PC-9 (cell line): ENCODE measurements at regions of chr17 and their contacts with region 1.

Region 1: DNA sequence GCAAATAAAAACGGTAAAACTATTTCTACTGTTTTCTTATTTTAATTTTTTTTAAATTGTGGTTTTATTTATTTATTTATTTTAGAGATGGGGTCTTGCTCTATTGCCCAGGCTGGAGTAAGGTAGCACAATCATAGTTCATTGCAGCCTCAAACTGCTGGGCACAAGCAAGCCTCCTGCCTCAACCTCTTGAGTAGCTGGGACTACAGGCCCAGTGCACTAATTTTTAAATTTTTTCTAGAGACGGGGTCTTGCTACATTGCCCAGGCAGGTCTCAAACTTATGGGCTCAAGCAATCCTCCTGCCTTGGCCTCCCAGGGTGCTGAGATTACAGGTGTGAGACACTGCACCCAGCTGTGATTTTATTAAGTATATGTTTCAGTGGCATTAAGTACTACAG is 46.5 kb upstream of the MRC2 start:
- DNase-seq: no peak
- H3K4me3 ChIP-seq: no peak overlapping the region
- H3K27ac ChIP-seq: no peak overlapping the region
- H3K4me1 ChIP-seq: no peaks in the 10 kb centered on the region
- H3K27me3 ChIP-seq: no peaks in the 10 kb centered on the region
- CTCF ChIP-seq: no peak

Region 2: DNA sequence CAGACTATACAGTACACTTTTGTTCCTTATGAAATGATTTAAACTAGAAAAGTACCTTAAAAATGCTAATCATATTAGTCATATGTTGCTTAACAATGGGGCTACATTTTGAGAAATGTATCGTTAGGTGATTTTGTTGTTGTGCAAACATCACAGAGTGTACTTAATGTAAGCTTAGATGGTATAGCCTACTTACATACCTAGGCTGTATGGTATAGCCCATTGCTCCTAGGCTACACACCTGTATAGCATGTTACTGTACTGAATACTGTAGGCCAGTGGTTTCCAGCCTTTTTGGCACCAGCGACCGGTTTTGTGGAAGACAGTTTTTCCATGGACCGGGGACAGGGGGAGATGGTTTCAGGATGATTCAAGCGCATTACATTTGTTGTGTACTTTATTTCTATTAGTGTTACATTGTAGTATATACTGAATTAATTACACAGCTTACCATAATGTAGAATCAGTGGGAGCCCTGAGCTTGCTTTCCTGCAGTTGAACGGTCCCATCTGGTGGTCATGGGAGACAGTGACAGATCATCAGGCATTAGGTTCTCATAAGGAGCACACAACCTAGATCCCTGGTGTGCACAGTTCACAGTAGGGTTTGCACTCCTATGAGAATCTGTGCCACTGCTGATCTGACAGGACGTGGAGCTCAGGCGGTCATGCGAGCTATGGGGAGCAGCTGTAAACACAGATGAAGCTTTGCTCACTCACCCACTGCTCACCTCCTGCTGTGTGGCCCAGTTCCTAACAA is 11.6 kb after region 1 on chr17:
- CTCF ChIA-PET with region 1: no interaction called
- POLR2A ChIA-PET with region 1: interaction called, 32 read pairs
- intact Hi-C with region 1: no loop called
- DNase-seq: peak in 1 of 2 experiments; percentile 76
- H3K4me3 ChIP-seq: no peak overlapping the region
- H3K27ac ChIP-seq: no peak overlapping the region
- H3K4me1 ChIP-seq: no peaks in the 10 kb centered on the region
- H3K27me3 ChIP-seq: no peaks in the 10 kb centered on the region
- CTCF ChIP-seq: no peak